Activated naive CD8-positive, alpha-beta T cell treated with anti-CD3 and anti-CD28 coated beads, Interleukin-2, amount 10 ng/mL, durations not matched to agents 7 days and 5 days (primary cell): ENCODE measurements at regions of chr20 and their contacts with region 1.

Region 1: DNA sequence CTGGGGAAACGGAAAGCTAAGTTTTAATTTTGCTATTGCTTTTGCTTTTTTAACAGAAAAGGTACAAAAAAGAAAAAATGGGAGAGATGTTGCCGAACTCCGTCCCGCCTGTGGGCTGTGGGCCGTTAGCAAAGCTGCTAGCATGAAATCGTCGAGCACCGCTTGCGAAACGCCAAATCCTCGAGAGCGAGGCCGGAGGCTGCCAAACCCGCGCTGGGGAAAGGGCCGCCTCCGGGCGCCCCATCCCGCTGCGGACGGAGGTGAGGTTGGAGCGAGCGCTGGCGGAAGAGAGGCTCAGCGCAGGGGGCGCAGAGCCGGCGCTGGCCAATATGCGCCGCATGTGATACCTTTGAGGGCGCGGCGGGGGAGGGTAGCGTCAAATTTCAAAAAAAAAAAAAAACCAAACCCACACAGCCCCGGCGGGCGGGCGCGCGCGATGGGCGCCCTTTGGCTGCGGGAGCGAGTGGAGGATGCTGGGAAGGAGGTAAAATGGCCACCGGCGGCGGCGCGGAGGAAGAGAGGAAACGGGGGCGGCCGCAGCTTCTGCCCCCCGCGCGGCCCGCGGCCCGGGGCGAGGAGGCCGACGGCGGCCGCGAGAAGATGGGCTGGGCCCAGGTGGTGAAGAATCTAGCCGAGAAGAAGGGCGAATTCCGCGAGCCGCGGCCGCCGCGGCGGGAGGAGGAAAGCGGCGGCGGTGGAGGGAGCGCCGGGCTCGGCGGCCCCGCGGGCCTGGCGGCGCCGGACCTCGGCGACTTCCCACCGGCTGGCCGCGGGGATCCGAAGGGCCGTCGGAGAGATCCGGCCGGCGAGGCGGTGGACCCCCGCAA is at the start of gene ZCCHC3:
- DNase-seq: peak; percentile 90
- ATAC-seq: peak; percentile 88
- H3K4me3 Mint-ChIP-seq: peak within 1 kb of the TSS; percentile 98
- H3K27ac Mint-ChIP-seq: peak within 1 kb of the TSS; percentile 99
- H3K4me1 Mint-ChIP-seq: peaks cover 39% of the 10 kb centered on the region
- H3K27me3 Mint-ChIP-seq: no peaks in the 10 kb centered on the region
- total RNA-seq, gene ZCCHC3: 30.0 to 30.6 TPM

Region 2: DNA sequence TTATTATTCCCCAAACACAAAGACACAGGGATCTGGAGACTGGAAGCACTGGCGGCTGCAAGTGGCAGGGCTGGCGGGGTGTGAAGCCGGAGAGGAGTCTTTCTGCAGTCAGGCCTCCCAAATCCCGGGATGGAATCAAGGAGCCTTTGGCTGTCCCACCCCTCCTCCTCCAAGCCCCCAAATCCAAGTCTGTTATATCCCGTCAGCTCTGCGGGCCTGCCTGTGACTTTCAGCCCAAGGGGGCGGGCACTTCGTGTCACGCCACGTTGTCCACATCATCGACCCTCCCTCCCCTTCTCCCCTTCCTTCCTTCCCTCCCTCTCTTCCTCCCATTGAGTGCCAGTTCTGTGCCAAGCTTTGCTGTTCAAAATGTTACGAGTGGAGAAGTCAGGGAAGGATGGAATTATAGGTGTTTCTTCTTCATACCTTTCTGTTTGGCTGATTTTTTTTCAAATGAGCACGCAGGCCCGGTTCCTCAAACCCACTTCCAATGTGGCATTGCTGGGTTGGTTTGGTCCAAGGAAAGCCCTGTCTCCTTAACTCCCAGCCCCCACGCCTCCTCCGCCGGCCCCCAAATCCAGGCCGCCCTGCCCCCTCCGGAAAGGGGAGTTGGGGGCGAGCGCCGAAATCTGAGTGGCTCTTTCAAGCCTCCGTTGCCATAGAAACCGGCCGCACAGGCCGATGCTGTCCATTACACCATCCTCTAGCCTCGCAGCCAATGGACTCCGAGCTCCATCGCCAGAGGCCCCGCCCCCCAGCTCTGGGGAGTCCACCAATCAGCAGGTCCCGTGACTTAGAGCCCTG is 12.7 kb after region 1 on chr20:
- POLR2A ChIA-PET with region 1: interaction called, 32 read pairs
- DNase-seq: peak; percentile 89
- ATAC-seq: peak; percentile 100
- H3K4me3 Mint-ChIP-seq: peak overlapping the region; percentile 85
- H3K27ac Mint-ChIP-seq: peak overlapping the region; percentile 79
- H3K4me1 Mint-ChIP-seq: peaks cover 18% of the 10 kb centered on the region
- H3K27me3 Mint-ChIP-seq: no peaks in the 10 kb centered on the region

Region 3: DNA sequence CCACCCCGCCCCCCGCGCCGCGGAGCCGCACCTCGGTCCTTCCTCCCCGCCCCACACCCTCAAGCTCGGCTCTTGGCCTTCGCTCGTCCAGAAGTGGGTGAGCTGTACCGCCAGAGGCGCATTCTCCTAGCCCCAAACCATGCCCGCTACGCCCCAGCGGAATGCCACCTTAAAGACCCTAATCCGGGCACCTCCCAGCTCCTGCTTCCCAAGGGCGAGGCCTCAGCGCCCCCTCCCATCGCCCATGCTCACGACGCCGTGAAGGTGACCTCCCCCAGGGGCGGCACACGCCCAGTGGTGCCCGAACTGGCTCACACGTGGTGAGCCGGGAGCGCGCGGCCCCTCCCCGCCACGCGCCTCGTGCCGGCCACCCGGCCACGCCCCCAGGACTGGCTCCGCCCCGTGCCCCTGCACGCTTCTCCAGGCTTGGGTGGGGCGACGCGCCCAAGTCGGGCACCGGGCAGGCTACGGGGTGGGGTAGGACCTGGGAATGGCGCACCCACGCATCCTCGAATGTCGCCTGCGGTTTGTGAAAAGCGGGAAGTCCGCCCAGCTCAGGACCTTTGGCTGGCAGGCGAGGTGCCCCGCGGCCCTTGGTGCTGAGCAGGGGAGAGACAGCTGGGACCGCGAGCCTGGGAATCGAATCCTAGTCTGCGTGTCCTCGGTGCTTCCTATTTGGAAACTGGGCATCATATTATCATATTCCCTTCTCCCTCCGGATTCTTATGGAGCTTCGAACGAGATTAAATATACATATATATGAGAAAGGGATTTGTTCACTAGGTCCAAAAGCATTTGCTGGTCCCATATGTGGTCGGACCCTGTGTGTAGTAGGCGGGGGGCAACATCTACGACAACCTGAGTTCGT is 27.1 kb after region 1 on chr20:
- POLR2A ChIA-PET with region 1: interaction called, 84 read pairs
- DNase-seq: peak; percentile 97
- ATAC-seq: peak; percentile 57
- H3K4me3 Mint-ChIP-seq: peak overlapping the region; percentile 90
- H3K27ac Mint-ChIP-seq: peak overlapping the region; percentile 92
- H3K4me1 Mint-ChIP-seq: peaks cover 24% of the 10 kb centered on the region
- H3K27me3 Mint-ChIP-seq: no peaks in the 10 kb centered on the region